Caco-2 (cell line): ENCODE measurements at regions of chr2 and their contacts with region 1.

Region 1: DNA sequence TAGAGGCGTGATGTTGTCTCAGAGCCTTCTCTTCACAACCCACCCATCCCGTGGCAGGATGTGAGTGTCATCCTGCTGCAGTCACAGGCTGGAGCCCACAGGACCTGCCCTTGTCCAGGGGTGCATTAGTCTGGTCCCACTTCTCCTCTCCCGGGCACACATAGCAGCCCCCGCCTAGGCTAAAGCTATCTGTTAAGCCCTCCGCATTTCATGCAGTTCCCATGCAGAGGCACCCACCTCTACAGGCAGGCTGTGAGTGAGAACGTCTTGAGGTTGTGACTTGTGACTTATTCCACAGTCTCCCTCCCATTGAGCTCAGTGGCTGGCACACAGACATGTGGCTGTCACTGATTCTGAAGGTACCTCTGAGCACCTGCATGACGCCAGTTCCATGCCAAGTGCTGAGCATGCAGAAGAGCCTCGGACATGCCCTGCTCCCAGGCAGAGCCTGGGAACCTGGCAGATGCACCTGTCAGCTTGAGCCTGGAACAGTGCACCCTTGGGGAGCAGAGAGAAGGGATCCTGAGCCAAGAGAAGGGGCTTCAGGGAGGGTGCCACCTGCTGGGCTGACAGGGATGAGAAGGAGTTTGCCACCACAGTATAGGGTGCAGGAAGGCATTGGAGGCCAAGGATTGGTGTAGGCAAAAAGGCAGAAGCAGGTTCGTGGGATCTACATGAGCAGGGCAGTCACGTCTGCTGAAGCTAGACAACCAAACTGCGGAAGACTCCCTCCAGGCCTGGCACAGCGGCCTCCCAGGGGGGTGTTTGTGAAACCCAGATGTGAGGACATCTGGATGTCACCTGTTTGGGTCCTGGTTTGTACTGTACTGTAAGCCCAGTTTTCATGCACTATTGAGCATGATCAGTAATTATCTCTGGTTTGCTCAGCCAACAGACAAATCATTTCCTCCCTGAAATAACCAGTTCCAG is 213.6 kb downstream of the GLI2 start:
- DNase-seq: peak in 1 of 2 experiments; percentile 61
- H3K4me3 ChIP-seq: no peak overlapping the region
- H3K4me3 Mint-ChIP-seq: no peak overlapping the region
- H3K27ac Mint-ChIP-seq: no peak overlapping the region
- H3K4me1 ChIP-seq: no peaks in the 10 kb centered on the region
- H3K4me1 Mint-ChIP-seq: peaks cover 6% of the 10 kb centered on the region
- H3K27me3 ChIP-seq: no peaks in the 10 kb centered on the region
- H3K27me3 Mint-ChIP-seq: no peaks in the 10 kb centered on the region
- CTCF ChIP-seq: peak; percentile 51 to 68

Region 2: DNA sequence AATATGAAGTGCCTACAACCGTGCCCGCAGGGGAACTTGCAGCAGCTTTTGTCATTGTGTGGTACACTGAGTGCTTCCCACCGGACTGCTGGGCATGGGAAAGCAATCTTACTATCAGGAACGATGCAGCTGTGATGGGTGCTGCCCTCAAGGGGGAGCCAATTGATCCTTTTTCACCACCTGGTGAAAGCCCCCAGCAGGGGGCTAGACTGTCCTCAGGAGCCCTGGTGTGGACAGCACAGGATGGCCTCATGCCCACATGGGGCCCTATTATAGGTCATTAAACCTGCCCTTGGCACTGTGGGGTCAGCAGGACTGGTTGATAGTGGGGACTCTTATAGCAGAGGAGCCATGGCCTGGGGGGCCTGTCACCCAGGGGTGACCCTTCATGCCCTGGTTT is 41.5 kb before region 1 on chr2:
- CTCF ChIA-PET with region 1: no interaction called
- POLR2A ChIA-PET with region 1: no interaction called
- intact Hi-C with region 1: loop called (anchors 1 kb)
- DNase-seq: peak in 1 of 2 experiments; percentile 40
- H3K4me3 ChIP-seq: no peak overlapping the region
- H3K4me3 Mint-ChIP-seq: no peak overlapping the region
- H3K27ac Mint-ChIP-seq: no peak overlapping the region
- H3K4me1 ChIP-seq: peaks cover 14% of the 10 kb centered on the region
- H3K4me1 Mint-ChIP-seq: peaks cover 7% of the 10 kb centered on the region
- H3K27me3 ChIP-seq: no peaks in the 10 kb centered on the region
- H3K27me3 Mint-ChIP-seq: no peaks in the 10 kb centered on the region
- CTCF ChIP-seq: peak; percentile 19 to 58

Region 3: DNA sequence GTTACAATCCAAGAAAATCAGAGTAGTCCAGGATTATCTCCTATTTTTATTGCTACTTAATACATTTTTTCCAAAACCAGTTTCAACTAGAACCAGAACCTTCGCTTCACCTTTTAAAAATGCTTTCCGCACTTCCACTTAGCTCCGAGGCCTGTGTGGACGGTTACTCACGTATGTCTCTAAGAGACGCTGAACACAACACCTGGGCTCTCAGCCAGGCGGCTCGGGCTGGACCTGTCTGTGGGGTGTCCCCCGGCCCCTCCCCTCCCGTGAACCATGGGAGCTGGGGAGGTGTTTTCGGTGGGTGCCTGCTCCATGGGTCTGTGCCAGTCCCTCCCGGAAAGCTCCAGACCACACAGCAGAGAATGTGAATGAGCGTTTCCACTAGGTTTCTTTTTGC is 10.1 kb after region 1 on chr2:
- CTCF ChIA-PET with region 1: no interaction called
- POLR2A ChIA-PET with region 1: no interaction called
- intact Hi-C with region 1: no loop called
- DNase-seq: no peak
- H3K4me3 ChIP-seq: no peak overlapping the region
- H3K4me3 Mint-ChIP-seq: no peak overlapping the region
- H3K27ac Mint-ChIP-seq: no peak overlapping the region
- H3K4me1 ChIP-seq: no peaks in the 10 kb centered on the region; the same call in 1 of the 2 replicates
- H3K4me1 Mint-ChIP-seq: peaks cover 9% of the 10 kb centered on the region
- H3K27me3 ChIP-seq: no peaks in the 10 kb centered on the region
- H3K27me3 Mint-ChIP-seq: no peaks in the 10 kb centered on the region
- CTCF ChIP-seq: no peak

Region 4: GRCh38 chr2:120969613-120970355 is 20.5 kb after region 1 on chr2:
- CTCF ChIA-PET with region 1: no interaction called
- POLR2A ChIA-PET with region 1: no interaction called
- intact Hi-C with region 1: no loop called
- DNase-seq: no peak
- H3K4me3 ChIP-seq: no peak overlapping the region
- H3K4me3 Mint-ChIP-seq: no peak overlapping the region
- H3K27ac Mint-ChIP-seq: no peak overlapping the region
- H3K4me1 ChIP-seq: no peaks in the 10 kb centered on the region
- H3K4me1 Mint-ChIP-seq: no peaks in the 10 kb centered on the region
- H3K27me3 ChIP-seq: no peaks in the 10 kb centered on the region; the same call in 1 of the 2 replicates
- H3K27me3 Mint-ChIP-seq: no peaks in the 10 kb centered on the region
- CTCF ChIP-seq: no peak

Region 5: DNA sequence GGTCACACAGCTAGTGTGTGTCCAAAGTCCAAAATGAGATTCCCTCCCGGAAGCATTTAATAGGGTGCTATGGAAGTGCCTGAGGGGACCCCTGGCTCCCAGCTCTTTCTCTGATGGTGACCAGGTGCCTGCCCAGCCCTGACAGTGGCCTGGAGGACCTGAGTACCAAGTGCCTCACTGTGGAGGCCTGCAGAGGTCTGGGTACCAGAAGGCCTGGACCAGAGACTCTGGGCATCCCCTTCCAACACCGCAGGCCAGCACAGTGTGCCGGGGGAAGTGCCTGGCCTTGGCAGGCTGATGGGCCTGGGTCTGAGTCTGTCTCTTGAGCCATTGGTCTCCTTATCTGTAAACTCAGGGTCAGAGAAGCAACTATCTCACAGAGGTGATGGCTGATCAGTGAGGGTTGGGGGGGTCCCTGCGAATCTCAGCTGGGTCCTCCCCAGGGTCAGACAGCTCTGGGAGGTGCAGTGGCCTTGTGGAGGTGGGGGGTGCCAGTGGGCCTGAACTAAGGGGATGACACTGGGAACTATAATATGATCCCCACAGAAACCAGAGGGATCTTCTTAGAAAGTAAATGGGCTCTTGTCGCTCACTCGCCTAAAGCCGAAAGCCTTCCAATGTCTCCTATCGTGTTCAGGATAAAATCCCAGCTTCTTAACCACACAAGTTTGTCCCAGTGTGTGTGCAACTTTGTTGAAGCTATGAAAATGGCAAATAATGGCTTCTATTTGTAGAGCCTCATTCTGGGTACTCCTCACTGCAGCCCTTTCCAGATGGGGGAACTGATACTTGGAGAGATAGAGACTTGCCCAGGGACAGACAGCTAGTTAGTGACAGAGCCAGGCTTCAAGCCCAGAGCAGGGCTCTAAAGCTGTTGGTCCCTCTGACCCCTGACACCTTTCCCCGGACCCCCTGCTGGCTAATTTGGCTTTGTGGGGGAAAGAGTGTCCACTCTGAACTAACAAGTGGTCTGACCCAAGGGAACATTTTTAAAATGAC is 110.7 kb after region 1 on chr2:
- CTCF ChIA-PET with region 1: interaction called, 10 read pairs
- POLR2A ChIA-PET with region 1: no interaction called
- intact Hi-C with region 1: no loop called
- DNase-seq: no peak
- H3K4me3 ChIP-seq: no peak overlapping the region
- H3K4me3 Mint-ChIP-seq: no peak overlapping the region
- H3K27ac Mint-ChIP-seq: no peak overlapping the region
- H3K4me1 ChIP-seq: no peaks in the 10 kb centered on the region
- H3K4me1 Mint-ChIP-seq: no peaks in the 10 kb centered on the region
- H3K27me3 ChIP-seq: no peaks in the 10 kb centered on the region
- H3K27me3 Mint-ChIP-seq: peaks cover 8% of the 10 kb centered on the region
- CTCF ChIP-seq: no peak